ENCODE measurements at regions of chr20 and their contacts with region 1.

Region 1: GRCh38 chr20:21235484-21236445 is 67.4 kb upstream of the XRN2 start:
- DNase-seq: peak; percentile 69
- H3K4me3 ChIP-seq: no peak overlapping the region
- H3K27ac ChIP-seq: no peak overlapping the region
- H3K4me1 ChIP-seq: peaks cover 0 to 11% (median 4%) of the 10 kb centered on the region in 4 donors
- H3K27me3 ChIP-seq: no peaks in the 10 kb centered on the region
- CTCF ChIP-seq: peak; percentile 70 to 78 (median 73)
- EP300 ChIP-seq: no peak
- POLR2A ChIP-seq: no peak

Region 2: GRCh38 chr20:20860078-20860806 is 375.5 kb before region 1 on chr20:
- in situ Hi-C with region 1: loop called in 3 of 4 experiments (anchors 25 kb)
- intact Hi-C with region 1: no loop called
- DNase-seq: peak; percentile 86
- H3K4me3 ChIP-seq: no peak overlapping the region
- H3K27ac ChIP-seq: no peak overlapping the region
- H3K4me1 ChIP-seq: no peaks in the 10 kb centered on the region
- H3K27me3 ChIP-seq: peaks cover 14% of the 10 kb centered on the region
- CTCF ChIP-seq: peak; percentile 88 to 91 (median 89)
- EP300 ChIP-seq: no peak
- POLR2A ChIP-seq: no peak

Region 3: DNA sequence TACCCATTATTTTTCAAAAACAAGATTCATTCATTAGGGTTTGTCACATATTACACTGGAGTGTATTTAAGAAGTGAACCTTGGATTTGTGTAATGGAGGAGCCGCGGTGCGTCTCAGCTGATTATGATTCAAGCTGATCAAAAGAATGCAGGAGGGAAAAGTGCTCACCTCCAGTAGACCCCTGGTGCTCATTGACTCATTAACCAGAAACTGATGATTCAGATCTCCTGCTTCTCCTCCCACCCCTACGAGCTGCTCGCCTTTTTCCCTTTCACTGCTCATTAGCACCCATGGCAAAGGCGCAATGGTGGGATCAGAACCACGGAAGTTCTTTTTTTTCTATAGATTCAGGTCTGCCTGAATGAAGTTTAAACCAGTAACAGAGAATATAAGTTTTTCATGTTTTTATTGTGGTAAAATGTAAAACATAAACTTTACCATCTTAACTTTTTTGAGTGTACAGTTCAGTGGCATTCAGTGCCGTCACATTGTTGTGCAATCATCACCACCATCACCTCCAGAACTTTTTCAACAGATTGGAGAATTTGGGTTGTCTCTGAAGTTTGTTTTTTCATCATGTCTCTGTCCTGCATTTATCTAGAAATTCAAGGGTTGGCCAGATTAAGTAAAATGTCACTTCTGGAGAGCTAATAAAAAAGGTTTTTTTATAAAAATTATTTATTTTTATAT is 231.2 kb before region 1 on chr20:
- in situ Hi-C with region 1: no loop called
- intact Hi-C with region 1: no loop called
- DNase-seq: no peak
- H3K4me3 ChIP-seq: no peak overlapping the region
- H3K27ac ChIP-seq: no peak overlapping the region
- H3K4me1 ChIP-seq: no peaks in the 10 kb centered on the region
- H3K27me3 ChIP-seq: no peaks in the 10 kb centered on the region
- CTCF ChIP-seq: no peak
- EP300 ChIP-seq: no peak
- POLR2A ChIP-seq: no peak

Region 4: GRCh38 chr20:21209668-21210067 is 26.1 kb before region 1 on chr20:
- in situ Hi-C with region 1: no loop called
- intact Hi-C with region 1: loop called (anchors 2 kb)
- DNase-seq: no peak
- H3K4me3 ChIP-seq: no peak overlapping the region
- H3K27ac ChIP-seq: no peak overlapping the region
- H3K4me1 ChIP-seq: no peaks in the 10 kb centered on the region
- H3K27me3 ChIP-seq: no peaks in the 10 kb centered on the region
- CTCF ChIP-seq: no peak
- EP300 ChIP-seq: no peak
- POLR2A ChIP-seq: no peak

Region 5: GRCh38 chr20:21225215-21225947 is 10.4 kb before region 1 on chr20:
- in situ Hi-C with region 1: no loop called
- intact Hi-C with region 1: no loop called
- DNase-seq: no peak
- H3K4me3 ChIP-seq: no peak overlapping the region
- H3K27ac ChIP-seq: peak overlapping the region in 3 of 4 donors; percentile 1 to 46 (median 10)
- H3K4me1 ChIP-seq: peaks cover 0 to 3% (median 0%) of the 10 kb centered on the region in 4 donors
- H3K27me3 ChIP-seq: no peaks in the 10 kb centered on the region
- CTCF ChIP-seq: no peak
- EP300 ChIP-seq: no peak
- POLR2A ChIP-seq: no peak

Region 6: GRCh38 chr20:21338291-21338690 is 102.5 kb after region 1 on chr20:
- in situ Hi-C with region 1: no loop called
- intact Hi-C with region 1: no loop called
- DNase-seq: no peak
- H3K4me3 ChIP-seq: no peak overlapping the region
- H3K27ac ChIP-seq: no peak overlapping the region
- H3K4me1 ChIP-seq: no peaks in the 10 kb centered on the region
- H3K27me3 ChIP-seq: no peaks in the 10 kb centered on the region
- CTCF ChIP-seq: no peak
- EP300 ChIP-seq: no peak
- POLR2A ChIP-seq: no peak